Body of pancreas (tissue), 4 donors: ENCODE measurements at regions of chr10 and their contacts with region 1.

Region 1: GRCh38 chr10:86371691-86372090 is 5.1 kb upstream of the GRID1 start:
- DNase-seq: peak in 1 of 4 donors; percentile 6
- ATAC-seq: no peak
- H3K4me3 ChIP-seq: no peak overlapping the region
- H3K27ac ChIP-seq: no peak overlapping the region
- H3K4me1 ChIP-seq: peaks cover 11% of the 10 kb centered on the region
- H3K27me3 ChIP-seq: no peaks in the 10 kb centered on the region
- CTCF ChIP-seq: no peak
- POLR2A ChIP-seq: no peak

Region 2: DNA sequence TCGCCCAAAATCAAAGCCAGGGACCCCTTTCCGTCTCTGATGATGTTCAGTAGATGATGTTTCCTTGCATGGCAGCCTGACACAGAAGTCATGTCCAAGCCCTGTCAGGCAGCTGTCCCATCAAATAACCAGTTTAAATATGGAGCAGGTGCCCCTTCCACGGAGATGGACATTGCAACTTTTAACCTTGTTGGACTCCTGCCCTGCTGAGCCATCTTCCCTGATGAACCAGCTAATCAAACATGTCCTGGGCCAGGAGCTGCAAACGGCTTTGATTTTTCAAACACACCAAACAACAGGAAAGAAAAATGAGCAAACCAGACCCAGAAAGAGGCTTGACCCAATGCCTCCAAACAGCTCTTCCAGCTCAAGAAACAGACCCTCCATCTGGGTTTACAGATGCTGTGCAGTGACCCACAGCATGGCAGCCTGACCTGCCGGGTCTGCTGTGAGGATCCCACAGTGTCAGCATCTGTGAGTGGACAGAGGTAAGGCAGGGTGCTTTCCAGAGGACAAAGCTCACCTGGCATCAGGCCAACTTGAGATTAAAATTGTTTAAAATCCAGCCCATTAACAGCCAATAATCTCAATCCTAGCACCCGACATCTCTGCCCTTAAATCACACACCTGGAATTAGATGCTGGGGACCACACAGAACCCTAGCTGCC is 377.7 kb before region 1 on chr10:
- intact Hi-C with region 1: loop called (anchors 5 kb)
- DNase-seq: no peak
- ATAC-seq: no peak
- H3K4me3 ChIP-seq: no peak overlapping the region
- H3K27ac ChIP-seq: no peak overlapping the region
- H3K4me1 ChIP-seq: no peaks in the 10 kb centered on the region
- H3K27me3 ChIP-seq: no peaks in the 10 kb centered on the region
- CTCF ChIP-seq: no peak
- POLR2A ChIP-seq: no peak